ENCODE measurements at regions of chr9 and their contacts with region 1.

Region 1: GRCh38 chr9:105064315-105065097 is 136.6 kb upstream of the ABCA1 start:
- DNase-seq: peak in 1 of 2 donors; percentile 98
- H3K4me3 ChIP-seq: no peak overlapping the region
- H3K27ac ChIP-seq: peak overlapping the region; percentile 80
- H3K4me1 ChIP-seq: peaks cover 26% of the 10 kb centered on the region
- H3K27me3 ChIP-seq: no peaks in the 10 kb centered on the region
- CTCF ChIP-seq: no peak
- POLR2A ChIP-seq: peak in 1 of 2 donors; percentile 47

Region 2: GRCh38 chr9:104810421-104811339 is 253.8 kb before region 1 on chr9:
- intact Hi-C with region 1: no loop called
- DNase-seq: no peak
- H3K4me3 ChIP-seq: no peak overlapping the region
- H3K27ac ChIP-seq: no peak overlapping the region
- H3K4me1 ChIP-seq: peaks cover 7% of the 10 kb centered on the region
- H3K27me3 ChIP-seq: no peaks in the 10 kb centered on the region
- CTCF ChIP-seq: no peak
- POLR2A ChIP-seq: no peak

Region 3: GRCh38 chr9:104991144-104991953 is 73.2 kb before region 1 on chr9:
- intact Hi-C with region 1: loop called (anchors 5 kb)
- DNase-seq: peak in 1 of 2 donors; percentile 98
- H3K4me3 ChIP-seq: peak overlapping the region; percentile 64 to 68
- H3K27ac ChIP-seq: peak overlapping the region; percentile 94
- H3K4me1 ChIP-seq: peaks cover 43% of the 10 kb centered on the region
- H3K27me3 ChIP-seq: no peaks in the 10 kb centered on the region
- CTCF ChIP-seq: no peak
- POLR2A ChIP-seq: peak in 1 of 2 donors; percentile 36

Region 4: GRCh38 chr9:105141146-105141975 is 76.9 kb after region 1 on chr9:
- intact Hi-C with region 1: loop called (anchors 10 kb)
- DNase-seq: peak in 1 of 2 donors; percentile 40
- H3K4me3 ChIP-seq: no peak overlapping the region
- H3K27ac ChIP-seq: no peak overlapping the region
- H3K4me1 ChIP-seq: no peaks in the 10 kb centered on the region
- H3K27me3 ChIP-seq: no peaks in the 10 kb centered on the region
- CTCF ChIP-seq: no peak
- POLR2A ChIP-seq: no peak